Ascending aorta (tissue), 2 donors: ENCODE measurements at regions of chr11 and their contacts with region 1.

Region 1: DNA sequence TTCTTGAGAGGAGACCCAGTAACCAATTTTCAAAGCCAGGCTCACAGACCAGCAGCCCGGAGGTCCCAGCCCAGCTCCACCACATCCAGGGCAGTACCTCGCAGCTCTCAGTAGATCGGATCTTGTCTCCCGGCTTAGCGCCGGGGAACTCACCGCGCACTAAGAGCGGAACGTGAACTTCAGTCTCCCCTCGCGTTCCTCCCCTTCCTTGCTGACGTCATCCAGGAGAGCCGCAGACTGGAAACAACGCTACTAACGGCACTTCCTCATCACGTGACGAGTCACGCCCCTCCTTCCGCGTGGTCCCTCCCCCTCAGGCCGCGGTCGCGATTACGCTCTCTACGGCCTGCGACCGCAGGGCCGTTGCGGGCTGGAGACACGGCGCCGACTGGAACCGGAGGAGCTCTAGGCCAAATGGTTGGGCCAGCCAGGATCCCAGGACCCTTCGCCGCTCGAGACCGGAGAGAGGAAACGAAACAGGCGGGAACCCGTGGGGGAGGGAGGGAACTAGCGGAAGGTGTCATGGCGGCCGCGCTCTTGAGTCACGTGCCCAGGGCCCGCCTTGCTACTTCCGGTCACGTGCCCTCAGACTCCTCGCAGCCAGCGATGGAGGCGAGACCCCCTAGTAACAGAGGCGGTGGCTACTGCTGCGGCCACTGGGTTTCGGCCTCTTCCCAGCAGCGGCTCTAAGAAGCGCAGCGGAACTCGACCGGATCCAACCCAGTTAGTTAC is at the starts of genes GTF2H1 and HPS5:
- DNase-seq: peak; percentile 87 to 98
- H3K4me3 ChIP-seq: peak within 1 kb of the TSS; percentile 65 to 93
- H3K27ac ChIP-seq: peak within 1 kb of the TSS; percentile 93 to 97
- H3K4me1 ChIP-seq: peaks cover 17 to 29% of the 10 kb centered on the region in 2 donors
- H3K27me3 ChIP-seq: no peaks in the 10 kb centered on the region
- CTCF ChIP-seq: no peak
- total RNA-seq, gene GTF2H1: 33.7 TPM
- total RNA-seq, gene HPS5: 31.7 TPM

Region 2: DNA sequence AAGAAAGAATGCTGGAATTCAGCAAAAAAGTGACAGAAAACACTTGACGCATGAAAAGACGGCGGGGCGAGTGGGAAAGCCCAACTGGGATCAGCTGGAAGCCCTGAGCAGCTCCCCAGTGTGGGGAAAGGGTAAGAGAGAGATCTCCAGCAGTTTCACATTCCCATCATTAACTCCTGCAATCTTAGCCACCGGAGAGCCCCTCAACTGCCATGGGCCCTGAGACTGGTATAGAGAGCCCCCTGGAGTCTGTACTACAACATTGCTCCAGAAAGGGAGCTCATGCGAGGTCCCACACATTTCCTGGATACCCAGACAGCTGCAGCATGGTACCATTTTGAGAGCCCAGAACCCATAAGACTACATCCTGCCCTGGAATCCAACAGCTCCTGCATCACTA is 118.4 kb before region 1 on chr11:
- intact Hi-C with region 1: no loop called
- DNase-seq: no peak
- H3K4me3 ChIP-seq: no peak overlapping the region
- H3K27ac ChIP-seq: no peak overlapping the region
- H3K4me1 ChIP-seq: no peaks in the 10 kb centered on the region
- H3K27me3 ChIP-seq: no peaks in the 10 kb centered on the region
- CTCF ChIP-seq: peak in 1 of 3 experiments; percentile 16

Region 3: DNA sequence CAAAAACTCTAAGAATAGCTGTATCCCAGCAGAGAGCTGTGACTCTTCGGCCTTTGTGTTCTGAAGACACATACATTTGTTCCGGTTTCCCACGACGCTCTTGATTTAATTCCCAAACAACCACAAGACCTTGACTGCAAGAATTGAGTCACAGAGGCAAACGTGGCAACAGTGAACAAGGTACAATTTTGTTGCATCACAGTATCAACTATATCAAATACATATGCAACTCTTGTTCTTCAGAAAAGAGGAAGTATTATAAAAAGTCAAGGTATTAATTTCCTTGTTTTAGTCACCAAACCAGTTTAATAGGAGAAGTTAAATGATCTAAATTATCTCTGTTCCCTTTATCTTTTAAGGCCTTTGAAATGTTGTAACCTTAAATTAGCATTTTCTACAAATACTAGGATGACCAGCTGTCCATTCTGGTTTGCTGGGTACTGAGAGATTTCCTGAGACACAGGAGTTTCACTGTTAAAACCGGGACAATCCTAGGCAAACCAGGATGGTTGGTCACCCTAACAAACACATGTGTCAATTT is 11.3 kb before region 1 on chr11:
- intact Hi-C with region 1: loop called (anchors 1 kb)
- DNase-seq: no peak
- H3K4me3 ChIP-seq: no peak overlapping the region
- H3K27ac ChIP-seq: peak overlapping the region; percentile 86 to 90
- H3K4me1 ChIP-seq: peaks cover 13 to 40% of the 10 kb centered on the region in 2 donors
- H3K27me3 ChIP-seq: no peaks in the 10 kb centered on the region
- CTCF ChIP-seq: no peak

Region 4: DNA sequence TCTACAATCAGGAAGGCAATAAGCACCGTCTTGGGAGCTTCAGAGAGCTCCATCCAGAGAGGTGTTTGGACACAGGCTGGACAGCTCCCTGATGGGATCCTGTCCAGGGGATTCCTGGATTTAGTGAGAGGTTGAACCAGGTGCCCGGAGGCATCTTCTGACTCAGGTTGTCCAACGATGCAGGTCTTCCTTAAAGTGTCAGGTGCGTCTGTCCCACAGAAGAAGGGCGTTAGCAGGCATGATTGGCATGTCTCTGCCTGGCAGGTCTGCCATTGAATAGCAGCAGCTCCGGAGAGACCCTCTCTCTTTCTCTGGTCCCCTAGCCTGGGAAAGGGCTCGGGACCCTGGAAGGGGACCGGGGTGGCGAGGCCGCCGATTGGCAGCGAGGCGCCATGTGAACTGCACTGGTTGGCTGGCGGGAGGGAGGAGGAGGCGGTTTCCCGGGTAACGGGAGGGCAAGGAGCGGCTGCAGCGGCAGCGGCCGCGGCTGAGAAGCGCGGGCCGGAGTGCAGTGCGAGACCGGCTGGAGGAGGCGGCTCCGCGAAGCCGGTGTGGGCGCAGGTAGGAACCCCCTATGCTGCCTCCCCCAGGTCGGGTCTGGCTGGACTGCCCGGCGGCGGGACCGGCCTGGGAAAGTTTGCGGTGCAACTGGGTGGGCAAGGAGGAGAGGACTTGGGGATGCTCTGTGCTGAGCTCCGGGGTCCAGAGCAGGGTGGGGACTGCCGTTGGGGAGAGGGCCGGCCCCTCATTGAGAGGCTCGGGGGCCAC is 1022.8 kb after region 1 on chr11:
- intact Hi-C with region 1: no loop called
- DNase-seq: no peak
- H3K4me3 ChIP-seq: peak overlapping the region; percentile 48 to 57
- H3K27ac ChIP-seq: no peak overlapping the region
- H3K4me1 ChIP-seq: peaks cover 6 to 10% of the 10 kb centered on the region in 2 donors
- H3K27me3 ChIP-seq: peaks cover 11% of the 10 kb centered on the region
- CTCF ChIP-seq: no peak